ENCODE measurements at regions of chr10 and their contacts with region 1.

Region 1: DNA sequence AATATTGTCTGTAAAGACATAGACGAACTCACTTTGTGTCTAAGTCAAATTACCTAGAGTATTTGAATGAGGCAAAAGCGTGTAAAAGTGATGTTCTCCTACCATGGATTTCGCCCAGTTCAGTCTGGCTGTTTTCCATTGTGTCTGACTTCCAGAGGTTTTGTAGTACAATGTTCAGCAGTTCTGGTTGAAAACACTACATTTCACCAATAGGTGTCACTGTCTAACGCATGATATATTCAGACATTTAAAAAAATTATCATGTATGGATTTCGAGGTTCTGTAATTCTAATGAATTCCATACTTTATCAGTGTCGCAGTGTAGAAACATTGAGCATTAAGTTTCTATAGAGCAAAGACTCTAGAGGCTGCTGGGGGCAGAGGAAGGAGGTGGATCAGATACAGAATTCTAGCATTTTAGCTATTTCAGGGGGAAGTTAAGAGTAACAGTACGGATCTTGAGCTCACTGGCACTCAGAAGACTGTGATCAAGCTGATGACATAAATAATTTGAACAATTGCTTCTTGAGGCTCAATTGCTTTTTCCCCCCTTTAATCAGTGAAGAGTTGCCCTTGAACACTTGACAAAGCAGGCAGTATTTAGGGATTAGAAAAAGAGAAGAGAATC is 196.9 kb upstream of the RHOBTB1 start:
- DNase-seq: peak in 2 of 9 experiments; percentile 14 to 39
- ATAC-seq: no peak
- H3K4me3 ChIP-seq: no peak overlapping the region
- H3K4me3 Mint-ChIP-seq: no peak overlapping the region
- H3K27ac ChIP-seq: no peak overlapping the region
- H3K27ac Mint-ChIP-seq: no peak overlapping the region
- H3K4me1 ChIP-seq: no peaks in the 10 kb centered on the region
- H3K4me1 Mint-ChIP-seq: no peaks in the 10 kb centered on the region
- H3K27me3 ChIP-seq: no peaks in the 10 kb centered on the region
- H3K27me3 Mint-ChIP-seq: no peaks in the 10 kb centered on the region
- CTCF ChIP-seq: peak; percentile 30

Region 2: GRCh38 chr10:60643874-60644273 is 497.0 kb before region 1 on chr10:
- CTCF ChIA-PET with region 1: no interaction called
- POLR2A ChIA-PET with region 1: no interaction called
- intact Hi-C with region 1: no loop called
- DNase-seq: no peak
- ATAC-seq: no peak
- H3K4me3 ChIP-seq: no peak overlapping the region
- H3K4me3 Mint-ChIP-seq: no peak overlapping the region
- H3K27ac ChIP-seq: no peak overlapping the region
- H3K27ac Mint-ChIP-seq: no peak overlapping the region
- H3K4me1 ChIP-seq: no peaks in the 10 kb centered on the region
- H3K4me1 Mint-ChIP-seq: peaks cover 2% of the 10 kb centered on the region
- H3K27me3 ChIP-seq: no peaks in the 10 kb centered on the region
- H3K27me3 Mint-ChIP-seq: peaks cover 4% of the 10 kb centered on the region
- CTCF ChIP-seq: no peak

Region 3: DNA sequence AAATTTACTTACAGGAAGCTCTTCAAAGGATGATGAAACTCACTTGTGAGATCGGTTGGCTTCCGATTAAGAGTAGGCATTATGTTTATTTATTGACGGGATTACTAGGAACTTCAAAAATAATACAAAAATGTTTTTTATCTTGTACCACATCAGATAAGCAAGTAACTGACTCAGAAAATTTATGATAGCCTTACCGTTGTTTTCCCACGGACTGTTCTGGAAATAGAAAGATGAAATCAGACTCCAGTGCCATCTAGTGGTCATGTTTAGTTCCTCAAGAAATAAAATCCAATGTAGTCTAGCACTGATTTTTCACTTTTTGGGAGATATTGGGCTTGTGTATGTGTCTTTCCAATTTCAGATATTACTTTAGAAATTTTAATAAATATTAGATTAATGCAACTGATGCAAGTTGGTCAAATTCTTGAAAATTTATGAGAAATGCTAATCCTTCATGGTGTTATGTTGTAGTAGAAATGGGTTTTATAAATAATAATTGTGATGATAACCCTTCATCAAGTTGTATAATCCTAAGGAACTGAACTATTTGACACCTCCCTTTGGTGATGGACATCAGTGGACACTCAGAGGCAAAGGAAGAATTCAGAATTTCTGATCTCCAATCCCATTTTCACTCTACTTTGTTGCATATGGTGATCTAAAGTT is 143.5 kb after region 1 on chr10:
- CTCF ChIA-PET with region 1: interaction called, 5 read pairs
- POLR2A ChIA-PET with region 1: no interaction called
- intact Hi-C with region 1: loop called in 1 of 2 experiments (anchors 5 kb)
- DNase-seq: peak in 2 of 9 experiments; percentile 51 to 62
- ATAC-seq: no peak
- H3K4me3 ChIP-seq: no peak overlapping the region
- H3K4me3 Mint-ChIP-seq: peak overlapping the region; percentile 64
- H3K27ac ChIP-seq: no peak overlapping the region
- H3K27ac Mint-ChIP-seq: no peak overlapping the region
- H3K4me1 ChIP-seq: peaks cover 15% of the 10 kb centered on the region
- H3K4me1 Mint-ChIP-seq: peaks cover 24% of the 10 kb centered on the region
- H3K27me3 ChIP-seq: no peaks in the 10 kb centered on the region
- H3K27me3 Mint-ChIP-seq: no peaks in the 10 kb centered on the region
- CTCF ChIP-seq: peak; percentile 92

Region 4: DNA sequence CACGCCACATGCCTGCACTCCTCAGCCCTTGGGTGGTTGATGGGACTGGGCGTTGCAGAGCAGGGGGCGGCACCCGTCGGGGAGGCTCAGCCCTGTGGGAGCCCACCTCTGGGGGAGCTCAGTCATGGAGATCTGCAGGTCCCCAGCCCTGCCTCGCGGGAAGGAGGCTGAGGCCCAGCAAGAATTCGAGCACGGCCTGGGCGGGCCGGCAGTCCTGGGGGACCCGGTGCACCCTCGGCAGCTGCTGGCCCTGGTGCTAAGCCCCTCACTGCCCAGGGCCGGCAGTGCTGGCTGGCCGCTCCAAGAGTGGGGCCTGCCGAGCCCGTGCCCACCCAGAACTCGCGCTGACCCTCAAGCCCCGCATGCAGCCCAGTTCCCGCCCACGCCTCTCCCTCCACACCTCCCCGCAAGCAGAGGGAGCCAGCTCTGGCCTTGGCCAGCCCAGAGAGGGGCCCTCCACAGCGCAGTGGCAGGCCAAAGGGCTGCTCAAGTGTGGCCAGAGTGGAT is 236.0 kb after region 1 on chr10:
- CTCF ChIA-PET with region 1: no interaction called
- POLR2A ChIA-PET with region 1: no interaction called
- intact Hi-C with region 1: no loop called
- DNase-seq: no peak
- ATAC-seq: no peak
- H3K4me3 ChIP-seq: no peak overlapping the region
- H3K4me3 Mint-ChIP-seq: no peak overlapping the region
- H3K27ac ChIP-seq: no peak overlapping the region
- H3K27ac Mint-ChIP-seq: no peak overlapping the region
- H3K4me1 ChIP-seq: no peaks in the 10 kb centered on the region
- H3K4me1 Mint-ChIP-seq: no peaks in the 10 kb centered on the region
- H3K27me3 ChIP-seq: no peaks in the 10 kb centered on the region
- H3K27me3 Mint-ChIP-seq: no peaks in the 10 kb centered on the region
- CTCF ChIP-seq: no peak

Region 5: GRCh38 chr10:61733358-61733940 is 592.6 kb after region 1 on chr10:
- CTCF ChIA-PET with region 1: no interaction called
- POLR2A ChIA-PET with region 1: no interaction called
- intact Hi-C with region 1: loop called in 1 of 2 experiments (anchors 5 kb)
- DNase-seq: peak in 2 of 9 experiments; percentile 9 to 34
- ATAC-seq: no peak
- H3K4me3 ChIP-seq: no peak overlapping the region
- H3K4me3 Mint-ChIP-seq: no peak overlapping the region
- H3K27ac ChIP-seq: no peak overlapping the region
- H3K27ac Mint-ChIP-seq: no peak overlapping the region
- H3K4me1 ChIP-seq: no peaks in the 10 kb centered on the region
- H3K4me1 Mint-ChIP-seq: no peaks in the 10 kb centered on the region
- H3K27me3 ChIP-seq: no peaks in the 10 kb centered on the region
- H3K27me3 Mint-ChIP-seq: peaks cover 24% of the 10 kb centered on the region
- CTCF ChIP-seq: peak; percentile 45